GM12878 (cell line): ENCODE measurements at regions of chr5 and their contacts with region 1.

Region 1: GRCh38 chr5:80672140-80672736 is 17.5 kb upstream of the DHFR start:
- DNase-seq: peak; percentile 28
- ATAC-seq: peak; percentile 64
- H3K4me3 ChIP-seq: no peak overlapping the region
- H3K27ac ChIP-seq: no peak overlapping the region
- H3K4me1 ChIP-seq: no peaks in the 10 kb centered on the region; the same call in 1 of the 2 replicates
- H3K27me3 ChIP-seq: no peaks in the 10 kb centered on the region
- CTCF ChIP-seq: peak; percentile 78 to 88 (median 85)
- EP300 ChIP-seq: no peak
- POLR2A ChIP-seq: no peak
- RAD21 ChIP-seq: peak; percentile 87

Region 2: DNA sequence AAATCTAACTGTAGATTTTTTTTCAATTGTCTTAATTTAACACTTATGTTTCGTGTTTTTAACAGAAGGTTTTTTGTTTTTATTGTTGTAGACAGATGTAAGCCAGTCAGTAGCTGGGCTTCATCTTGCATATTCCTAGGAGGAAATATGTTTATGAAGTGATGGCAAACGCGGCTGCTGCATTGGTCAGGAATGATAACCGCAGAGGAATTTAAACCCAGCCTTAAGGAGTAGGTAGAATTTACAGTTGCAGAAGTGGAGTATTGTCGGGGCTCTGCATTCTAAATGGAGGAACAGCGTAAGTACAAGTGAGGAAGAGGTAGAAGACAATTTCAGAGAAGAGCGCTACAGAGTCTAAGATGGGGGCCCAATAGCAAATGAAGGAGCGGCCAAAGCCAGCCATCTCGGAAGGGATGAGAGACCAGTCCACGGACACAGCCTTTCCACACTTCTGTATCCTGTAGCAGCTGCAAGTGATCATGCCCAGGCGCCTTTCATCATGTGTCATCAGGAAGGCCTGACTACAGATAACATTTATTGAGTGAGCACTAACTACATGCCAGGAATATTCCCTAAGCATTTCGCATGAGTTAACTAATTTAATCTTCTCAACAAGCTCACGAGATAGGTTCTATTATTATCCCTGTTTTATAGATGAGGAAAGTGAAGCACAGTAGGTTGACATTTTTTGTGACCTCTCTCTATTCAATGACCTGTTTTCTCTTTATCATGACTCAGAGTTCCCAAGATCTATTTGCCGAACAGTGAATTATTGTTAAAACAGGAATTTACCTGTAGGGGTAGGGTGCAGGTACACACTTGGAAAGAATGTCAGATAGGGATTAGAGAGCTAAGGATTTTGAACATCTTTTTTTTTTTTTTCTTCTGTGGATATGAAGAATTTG is 944.5 kb before region 1 on chr5:
- CTCF ChIA-PET with region 1: no interaction called
- POLR2A ChIA-PET with region 1: interaction called, 11 read pairs
- RAD21 ChIA-PET with region 1: no interaction called
- SMC1A ChIA-PET with region 1: no interaction called
- in situ Hi-C with region 1: no loop called
- intact Hi-C with region 1: no loop called
- DNase-seq: no peak
- ATAC-seq: no peak
- H3K4me3 ChIP-seq: no peak overlapping the region
- H3K27ac ChIP-seq: no peak overlapping the region
- H3K4me1 ChIP-seq: no peaks in the 10 kb centered on the region
- H3K27me3 ChIP-seq: peaks cover 0 to 1% of the 10 kb centered on the region in 2 experiments; a peak in 1 of 4 replicates
- CTCF ChIP-seq: no peak
- EP300 ChIP-seq: no peak
- POLR2A ChIP-seq: no peak
- RAD21 ChIP-seq: no peak

Region 3: DNA sequence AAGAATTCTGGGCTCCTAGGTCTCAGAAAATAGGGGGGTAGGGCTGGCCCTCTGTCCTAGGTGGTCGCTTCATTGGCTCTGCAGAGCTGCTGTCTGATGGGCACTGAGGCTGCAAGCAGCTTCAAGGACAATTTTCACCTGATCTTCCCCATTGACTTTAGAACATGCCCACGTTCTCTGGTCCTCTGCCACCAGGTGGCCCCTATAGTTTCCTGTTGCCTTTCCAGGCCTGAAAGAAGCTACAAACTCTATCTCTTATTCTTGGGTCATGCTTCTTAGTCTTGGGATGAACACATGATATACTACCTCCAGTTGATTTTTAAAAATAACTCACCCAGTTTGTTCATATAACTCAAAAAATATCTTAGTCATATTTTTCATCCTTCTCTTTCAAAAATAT is 326.2 kb before region 1 on chr5:
- CTCF ChIA-PET with region 1: interaction called, 9 read pairs
- POLR2A ChIA-PET with region 1: no interaction called
- RAD21 ChIA-PET with region 1: interaction called, 4 read pairs
- SMC1A ChIA-PET with region 1: interaction called, 3 read pairs
- in situ Hi-C with region 1: loop called (anchors 10 kb)
- intact Hi-C with region 1: loop called (anchors 10 kb)
- DNase-seq: no peak
- ATAC-seq: peak; percentile 81
- H3K4me3 ChIP-seq: no peak overlapping the region
- H3K27ac ChIP-seq: no peak overlapping the region
- H3K4me1 ChIP-seq: no peaks in the 10 kb centered on the region
- H3K27me3 ChIP-seq: no peaks in the 10 kb centered on the region
- CTCF ChIP-seq: peak; percentile 49 to 59 (median 58); a peak in 5 of 6 replicates
- EP300 ChIP-seq: no peak
- POLR2A ChIP-seq: no peak
- RAD21 ChIP-seq: peak; percentile 59

Region 4: DNA sequence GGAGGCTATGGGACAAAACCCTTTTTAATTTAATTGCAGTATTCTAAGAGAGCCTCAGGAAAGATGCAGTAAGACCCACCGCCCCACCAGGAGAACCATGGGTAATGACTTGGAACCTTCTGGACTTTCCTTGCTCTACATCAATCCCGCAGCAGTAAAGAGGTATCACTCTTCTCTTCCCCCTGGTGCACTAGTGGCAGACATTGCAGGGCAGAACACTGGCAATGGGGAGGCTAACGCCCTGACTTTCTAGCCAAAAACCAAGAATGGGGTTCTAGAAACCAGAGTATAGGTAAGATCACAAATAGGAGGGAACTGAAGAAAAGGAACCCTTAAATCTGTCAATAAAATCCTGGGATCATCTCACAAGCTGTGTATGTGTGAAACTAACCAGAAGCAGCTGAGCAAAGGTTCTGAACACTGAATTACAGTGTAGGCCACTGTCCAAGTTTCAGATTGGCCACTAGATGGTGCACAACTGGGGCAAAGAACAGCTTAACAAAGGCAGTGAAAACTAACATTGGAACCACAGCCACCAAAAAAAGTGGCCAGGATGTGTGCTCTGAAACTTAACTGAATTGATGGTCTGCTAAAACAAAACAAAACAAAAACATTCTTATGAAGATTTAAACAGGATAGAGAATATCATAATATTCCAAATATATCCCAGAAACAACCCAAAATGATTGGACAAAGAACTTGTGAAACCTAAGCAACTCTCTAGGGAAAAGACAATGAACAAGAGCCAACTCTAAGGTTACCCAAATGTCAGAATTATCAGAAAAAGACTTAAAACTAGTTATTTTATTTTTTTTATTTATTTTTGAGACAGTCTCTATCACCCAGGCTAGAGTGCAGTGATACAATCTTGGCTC is 191.0 kb before region 1 on chr5:
- CTCF ChIA-PET with region 1: interaction called, 116 read pairs
- POLR2A ChIA-PET with region 1: no interaction called
- RAD21 ChIA-PET with region 1: interaction called, 15 read pairs
- SMC1A ChIA-PET with region 1: interaction called, 23 read pairs
- in situ Hi-C with region 1: loop called (anchors 5 kb)
- intact Hi-C with region 1: loop called (anchors 1 kb)
- DNase-seq: peak; percentile 27
- ATAC-seq: peak; percentile 100
- H3K4me3 ChIP-seq: no peak overlapping the region
- H3K27ac ChIP-seq: no peak overlapping the region
- H3K4me1 ChIP-seq: no peaks in the 10 kb centered on the region
- H3K27me3 ChIP-seq: no peaks in the 10 kb centered on the region
- CTCF ChIP-seq: peak; percentile 69 to 86 (median 85)
- EP300 ChIP-seq: no peak
- POLR2A ChIP-seq: no peak
- RAD21 ChIP-seq: peak; percentile 61

Region 5: DNA sequence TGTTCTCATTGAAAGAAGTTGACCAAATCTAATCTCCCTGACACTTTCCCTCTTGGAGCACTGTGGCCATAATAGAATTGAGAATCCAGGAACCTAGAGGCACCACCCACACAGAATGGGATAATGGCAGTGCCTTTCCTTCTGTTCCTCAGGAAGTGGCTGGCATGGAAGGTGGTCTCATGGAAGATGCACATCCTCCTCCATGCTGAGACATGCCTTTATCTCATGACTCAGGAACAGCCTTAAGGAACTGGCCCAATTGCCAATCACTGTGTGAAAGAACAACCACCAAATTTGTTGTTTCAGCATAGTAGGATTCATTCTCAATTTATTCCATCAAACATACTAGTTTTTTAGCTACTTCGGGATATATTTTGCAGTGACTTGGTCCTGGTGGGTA is 150.4 kb after region 1 on chr5:
- CTCF ChIA-PET with region 1: no interaction called
- POLR2A ChIA-PET with region 1: no interaction called
- RAD21 ChIA-PET with region 1: no interaction called
- SMC1A ChIA-PET with region 1: no interaction called
- in situ Hi-C with region 1: no loop called
- intact Hi-C with region 1: no loop called
- DNase-seq: no peak
- ATAC-seq: no peak
- H3K4me3 ChIP-seq: no peak overlapping the region
- H3K27ac ChIP-seq: no peak overlapping the region
- H3K4me1 ChIP-seq: no peaks in the 10 kb centered on the region
- H3K27me3 ChIP-seq: no peaks in the 10 kb centered on the region
- CTCF ChIP-seq: no peak
- EP300 ChIP-seq: no peak
- POLR2A ChIP-seq: no peak
- RAD21 ChIP-seq: no peak

Region 6: GRCh38 chr5:80904533-80905187 is 232.4 kb after region 1 on chr5:
- CTCF ChIA-PET with region 1: no interaction called
- POLR2A ChIA-PET with region 1: no interaction called
- RAD21 ChIA-PET with region 1: no interaction called
- SMC1A ChIA-PET with region 1: no interaction called
- in situ Hi-C with region 1: no loop called
- intact Hi-C with region 1: no loop called
- DNase-seq: peak; percentile 7
- ATAC-seq: peak; percentile 67
- H3K4me3 ChIP-seq: no peak overlapping the region
- H3K27ac ChIP-seq: no peak overlapping the region
- H3K4me1 ChIP-seq: peaks cover 3% of the 10 kb centered on the region; the same call in 1 of the 2 replicates
- H3K27me3 ChIP-seq: no peaks in the 10 kb centered on the region
- CTCF ChIP-seq: no peak
- EP300 ChIP-seq: no peak
- POLR2A ChIP-seq: no peak
- RAD21 ChIP-seq: no peak

Region 7: GRCh38 chr5:80998590-80998979 is 326.3 kb after region 1 on chr5:
- CTCF ChIA-PET with region 1: no interaction called
- POLR2A ChIA-PET with region 1: no interaction called
- RAD21 ChIA-PET with region 1: no interaction called
- SMC1A ChIA-PET with region 1: no interaction called
- in situ Hi-C with region 1: no loop called
- intact Hi-C with region 1: no loop called
- DNase-seq: no peak
- ATAC-seq: no peak
- H3K4me3 ChIP-seq: no peak overlapping the region
- H3K27ac ChIP-seq: no peak overlapping the region
- H3K4me1 ChIP-seq: no peaks in the 10 kb centered on the region
- H3K27me3 ChIP-seq: peaks cover 2% of the 10 kb centered on the region in 2 experiments
- CTCF ChIP-seq: no peak
- EP300 ChIP-seq: no peak
- POLR2A ChIP-seq: no peak
- RAD21 ChIP-seq: no peak

Region 8: GRCh38 chr5:82225525-82226172 is 1553.4 kb after region 1 on chr5:
- CTCF ChIA-PET with region 1: no interaction called
- POLR2A ChIA-PET with region 1: no interaction called
- RAD21 ChIA-PET with region 1: no interaction called
- SMC1A ChIA-PET with region 1: no interaction called
- in situ Hi-C with region 1: no loop called
- intact Hi-C with region 1: no loop called
- DNase-seq: peak; percentile 37
- ATAC-seq: peak; percentile 97
- H3K4me3 ChIP-seq: no peak overlapping the region
- H3K27ac ChIP-seq: no peak overlapping the region
- H3K4me1 ChIP-seq: no peaks in the 10 kb centered on the region
- H3K27me3 ChIP-seq: no peaks in the 10 kb centered on the region
- CTCF ChIP-seq: peak; percentile 82 to 94 (median 89)
- EP300 ChIP-seq: no peak
- POLR2A ChIP-seq: no peak
- RAD21 ChIP-seq: peak; percentile 96